Common myeloid progenitor, CD34-positive (primary cell): ENCODE measurements at regions of chr2 and their contacts with region 1.

Region 1: DNA sequence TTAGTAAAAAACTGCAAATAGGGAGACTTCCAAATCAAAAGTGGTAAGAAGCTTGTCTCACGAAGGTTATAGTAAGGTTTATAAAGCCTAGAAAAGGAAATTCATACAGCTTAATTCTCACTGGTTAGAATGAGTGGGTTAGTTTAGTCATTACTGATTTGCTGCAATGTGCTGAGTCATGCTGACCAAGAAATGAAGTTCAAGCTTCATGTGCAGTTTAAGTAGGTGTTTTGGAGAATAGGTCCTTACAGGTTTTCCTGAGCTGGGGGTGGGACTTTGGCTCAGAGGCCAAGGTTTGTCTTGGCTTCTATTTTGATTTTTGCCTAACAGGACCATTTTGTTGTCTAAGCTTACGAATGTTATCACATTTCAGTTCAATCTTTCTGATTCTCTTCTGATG is 15.1 kb downstream of the CLIP4 start:
- DNase-seq: peak; percentile 67 to 89 (median 85)
- H3K4me3 ChIP-seq: peak overlapping the region in 1 of 7 experiments; percentile 34
- H3K27ac ChIP-seq: peak overlapping the region in 1 of 2 experiments; percentile 45
- H3K4me1 ChIP-seq: peaks cover 0 to 14% (median 11%) of the 10 kb centered on the region in 4 experiments
- H3K27me3 ChIP-seq: no peaks in the 10 kb centered on the region

Region 2: DNA sequence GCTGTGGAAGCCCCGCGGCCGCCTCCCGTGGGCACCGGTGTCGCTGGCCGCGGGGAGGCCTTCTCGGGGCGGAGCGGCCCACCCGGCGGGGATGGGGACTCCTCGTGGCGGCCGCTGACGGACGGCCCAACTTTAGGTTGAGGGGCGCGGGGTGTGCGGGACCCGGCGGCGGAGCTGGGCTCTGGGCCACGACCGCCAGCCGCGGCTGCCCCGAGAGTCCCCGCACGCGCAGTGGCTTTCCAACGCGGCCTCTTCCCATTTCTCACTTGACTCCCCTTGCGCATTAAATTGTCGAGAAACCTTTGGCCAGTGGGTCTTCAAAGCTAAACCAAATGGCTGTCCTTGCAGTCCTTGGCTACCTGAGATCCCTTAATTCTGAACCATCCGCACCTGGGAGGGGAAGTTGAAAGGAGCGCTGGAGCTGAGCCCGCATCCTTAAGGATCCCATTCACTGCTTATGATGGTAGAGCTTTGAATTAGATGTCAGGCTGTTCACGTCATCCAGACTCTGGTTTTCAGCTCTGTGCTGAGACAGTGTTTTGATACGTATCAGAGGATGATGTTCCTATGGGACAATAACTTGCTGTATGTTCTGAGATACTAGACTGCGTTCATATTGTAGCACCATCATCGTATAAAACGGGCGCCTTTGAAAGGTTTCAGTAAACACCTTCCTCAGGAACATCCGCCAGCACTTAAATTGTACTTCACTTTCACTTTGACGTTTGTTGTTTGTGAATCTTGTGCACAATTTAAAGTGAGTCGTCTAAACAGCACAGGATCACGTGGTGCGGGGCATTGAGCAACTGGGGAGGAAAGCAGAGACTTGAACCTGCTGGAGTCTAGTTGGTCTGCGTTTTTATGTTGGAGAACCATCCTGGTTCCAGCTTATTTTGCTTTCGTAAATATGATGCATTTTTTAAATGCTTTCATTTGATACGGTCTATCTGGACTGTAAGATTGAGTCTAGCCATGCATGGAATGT is 14.2 kb before region 1 on chr2:
- CTCF ChIA-PET with region 1: interaction called, 17 read pairs
- POLR2A ChIA-PET with region 1: interaction called, 6 read pairs
- DNase-seq: peak; percentile 67 to 91 (median 88)
- H3K4me3 ChIP-seq: peak overlapping the region; percentile 63 to 92 (median 81)
- H3K27ac ChIP-seq: peak overlapping the region; percentile 42 to 81
- H3K4me1 ChIP-seq: peaks cover 7 to 48% (median 24%) of the 10 kb centered on the region in 4 experiments
- H3K27me3 ChIP-seq: no peaks in the 10 kb centered on the region